Activated CD4-positive, alpha-beta T cell treated with anti-CD3 and anti-CD28 coated beads, Interleukin-2, amount 10 ng/mL, durations not matched to agents 24 days and 14 days (primary cell): ENCODE measurements at regions of chr2 and their contacts with region 1.

Region 1: DNA sequence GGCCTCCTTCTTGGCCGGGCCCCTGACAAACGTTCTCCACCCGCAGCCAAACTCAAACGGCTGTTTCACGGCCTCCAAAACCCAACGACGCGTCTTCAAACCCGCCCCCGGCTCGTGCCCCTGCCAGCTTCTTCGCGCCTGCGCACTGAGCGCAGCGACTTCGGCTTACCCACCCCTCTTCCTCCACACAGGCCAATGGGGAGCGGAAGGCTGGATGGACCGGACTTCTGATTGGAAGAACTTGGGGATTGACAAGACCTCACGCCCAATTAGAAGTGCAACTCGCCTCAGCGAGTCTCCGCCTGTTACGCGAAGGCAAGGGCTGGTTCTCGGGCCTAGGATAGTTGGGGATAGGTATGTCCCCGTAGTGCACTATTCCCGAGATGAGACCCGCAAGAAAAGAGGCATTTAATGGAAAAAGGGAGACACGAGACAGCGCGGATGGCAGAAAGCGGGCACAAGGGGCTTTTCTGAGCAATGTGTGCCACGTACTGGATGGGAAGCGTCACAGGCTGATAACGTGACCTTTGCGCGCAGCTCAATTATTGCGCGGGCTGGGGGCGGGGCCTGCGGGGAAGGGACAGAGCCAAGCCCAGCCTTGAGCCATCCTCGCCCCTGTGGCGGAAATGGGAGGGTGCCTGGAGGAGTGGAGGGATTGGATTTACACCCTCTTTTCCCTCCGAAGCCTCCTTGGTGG is at the start of gene LAPTM4A:
- DNase-seq: peak; percentile 99
- H3K4me3 Mint-ChIP-seq: no peak within 1 kb of the TSS
- H3K27ac Mint-ChIP-seq: no peak within 1 kb of the TSS
- H3K4me1 Mint-ChIP-seq: peaks cover 23% of the 10 kb centered on the region
- H3K27me3 Mint-ChIP-seq: peaks cover 22% of the 10 kb centered on the region
- total RNA-seq, gene LAPTM4A: 24.3 and 25.3 TPM in 2 replicates

Region 2: GRCh38 chr2:19989681-19990415 is 61.8 kb before region 1 on chr2 and contains the start of gene WDR35:
- intact Hi-C with region 1: loop called (anchors 1 kb)
- DNase-seq: peak; percentile 98
- H3K4me3 Mint-ChIP-seq: peak within 1 kb of the TSS; percentile 92
- H3K27ac Mint-ChIP-seq: peak within 1 kb of the TSS; percentile 88
- H3K4me1 Mint-ChIP-seq: peaks cover 15% of the 10 kb centered on the region
- H3K27me3 Mint-ChIP-seq: peaks cover 28% of the 10 kb centered on the region
- total RNA-seq, gene WDR35: 8.1 and 9.0 TPM in 2 replicates

Region 3: DNA sequence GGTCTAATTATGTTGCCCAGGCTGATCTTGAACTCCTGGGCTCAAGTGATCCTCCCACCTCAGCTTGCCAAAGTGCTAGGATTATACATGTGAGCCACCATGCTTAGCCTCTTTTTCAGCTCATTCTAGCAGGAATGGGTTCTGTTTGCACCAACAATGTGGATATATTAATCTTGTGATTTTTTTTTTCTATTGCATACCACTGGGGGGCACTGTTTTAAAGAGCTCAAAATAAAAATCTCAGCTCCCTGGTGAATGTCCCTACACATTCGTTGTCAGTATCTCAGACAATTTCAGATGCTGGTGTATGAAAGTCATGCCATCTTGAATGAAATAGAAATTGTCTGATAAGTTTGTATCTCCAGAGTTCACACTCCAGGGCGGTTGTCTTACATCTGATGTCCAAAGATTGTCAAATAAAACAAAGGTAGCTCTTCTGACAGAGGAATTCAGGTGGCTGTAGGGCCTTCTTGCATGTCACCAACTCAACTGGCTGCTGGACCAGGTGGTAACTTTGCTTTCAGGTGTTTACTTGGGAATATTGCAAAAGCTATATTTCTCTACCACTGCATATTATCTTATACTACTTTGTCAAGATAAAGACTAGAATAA is 36.1 kb before region 1 on chr2:
- intact Hi-C with region 1: loop called (anchors 2 kb)
- DNase-seq: peak; percentile 70
- H3K4me3 Mint-ChIP-seq: no peak overlapping the region
- H3K27ac Mint-ChIP-seq: no peak overlapping the region
- H3K4me1 Mint-ChIP-seq: peaks cover 4% of the 10 kb centered on the region
- H3K27me3 Mint-ChIP-seq: peaks cover 40% of the 10 kb centered on the region

Region 4: GRCh38 chr2:20097879-20098714 is 46.4 kb after region 1 on chr2:
- intact Hi-C with region 1: loop called (anchors 2 kb)
- DNase-seq: peak; percentile 91
- H3K4me3 Mint-ChIP-seq: no peak overlapping the region
- H3K27ac Mint-ChIP-seq: no peak overlapping the region
- H3K4me1 Mint-ChIP-seq: peaks cover 5% of the 10 kb centered on the region
- H3K27me3 Mint-ChIP-seq: peaks cover 14% of the 10 kb centered on the region